Sciatic nerve (tissue), 2 donors: ENCODE measurements at regions of chr19 and their contacts with region 1.

Region 1: DNA sequence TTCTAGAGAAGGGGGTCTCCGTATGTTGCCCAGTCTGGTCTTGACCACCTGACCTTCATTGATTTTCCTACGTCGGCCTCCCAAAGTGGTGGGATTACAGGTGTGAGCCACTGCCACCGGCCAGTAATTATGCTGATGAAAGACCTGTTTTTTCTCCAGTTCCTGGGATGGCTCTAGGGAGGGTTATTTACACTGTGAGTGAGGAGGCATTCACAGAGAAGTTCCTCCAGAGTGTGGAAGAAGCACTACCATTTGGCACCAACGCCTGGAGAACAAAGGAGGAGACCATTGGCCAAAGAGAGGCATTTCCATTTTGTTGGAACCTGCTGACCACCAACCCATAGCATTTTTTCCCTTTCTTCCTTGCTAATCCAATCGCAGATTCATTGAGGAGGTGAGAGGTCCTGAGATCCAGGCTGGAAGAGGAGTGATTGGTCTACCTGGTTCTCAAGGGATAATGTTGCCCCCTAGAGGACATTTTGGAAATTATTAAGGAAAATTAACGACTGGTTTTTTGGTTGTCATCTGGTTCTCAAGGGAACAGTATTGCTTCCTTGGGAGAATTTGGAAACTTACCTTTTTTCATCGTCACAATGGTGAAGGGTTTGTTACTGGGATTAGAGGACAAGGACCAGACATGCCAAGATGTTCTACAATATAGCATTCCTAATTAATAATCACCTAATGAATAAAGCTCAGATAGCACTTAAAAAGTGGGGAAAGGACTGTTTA is 5.5 kb upstream of the SAE1 start:
- DNase-seq: no peak
- ATAC-seq: peak; percentile 83

Region 2: DNA sequence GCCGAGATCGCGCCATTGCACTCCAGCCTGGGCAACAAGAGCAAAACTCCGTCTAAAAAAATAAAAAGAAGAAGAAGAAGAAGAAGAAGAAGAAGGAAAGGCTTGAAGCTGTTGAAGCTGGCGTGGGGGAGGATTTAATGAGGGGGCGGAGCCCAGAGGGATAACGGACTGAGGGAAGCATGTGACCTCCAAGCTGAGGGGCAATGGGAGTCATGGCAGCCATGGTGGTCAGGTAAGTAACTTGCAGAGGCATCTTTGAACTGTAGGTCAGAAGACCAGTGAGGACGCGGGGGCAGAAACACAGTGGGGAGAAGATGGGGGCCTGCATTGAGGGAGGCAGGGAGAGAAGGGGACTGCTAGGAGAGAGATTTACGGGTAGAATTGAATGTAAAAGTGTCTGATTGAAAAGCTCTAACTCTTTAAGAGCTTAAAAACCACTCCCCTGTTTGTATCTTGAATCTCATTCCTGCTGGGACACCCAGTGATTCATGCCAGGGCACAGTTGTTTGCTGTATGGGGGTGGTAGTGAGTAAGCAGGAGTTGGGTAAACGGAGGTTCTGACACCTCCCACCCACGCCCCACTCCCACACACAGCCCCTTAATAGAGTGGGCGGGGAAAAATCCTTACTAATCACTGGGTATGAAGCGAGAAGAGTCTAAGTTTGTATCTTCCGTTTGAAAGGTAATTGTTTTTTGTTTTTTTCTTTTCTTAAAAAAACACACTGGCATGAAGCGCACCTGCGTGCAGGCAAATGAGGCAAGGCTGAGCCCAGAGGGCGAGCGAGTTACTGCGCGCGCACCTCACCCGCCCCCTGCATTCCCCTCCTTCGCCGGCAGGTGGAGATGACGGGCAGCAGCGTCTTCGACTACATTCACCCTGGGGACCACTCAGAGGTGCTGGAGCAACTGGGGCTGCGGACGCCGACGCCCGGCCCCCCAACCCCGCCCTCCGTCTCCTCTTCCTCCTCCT is 89.7 kb before region 1 on chr19:
- intact Hi-C with region 1: loop called (anchors 10 kb)
- DNase-seq: peak; percentile 93
- ATAC-seq: peak; percentile 95

Region 3: GRCh38 chr19:47075179-47075810 is 49.8 kb before region 1 on chr19:
- intact Hi-C with region 1: loop called (anchors 2 kb)
- DNase-seq: no peak
- ATAC-seq: no peak